ENCODE measurements at regions of chr17 and their contacts with region 1.

Region 1: GRCh38 chr17:61247439-61247838 is 152.2 kb upstream of the TBX2 start:
- DNase-seq: no peak
- ATAC-seq: no peak
- H3K4me3 ChIP-seq: no peak overlapping the region
- H3K4me3 Mint-ChIP-seq: no peak overlapping the region
- H3K27ac ChIP-seq: no peak overlapping the region
- H3K27ac Mint-ChIP-seq: no peak overlapping the region
- H3K4me1 ChIP-seq: no peaks in the 10 kb centered on the region
- H3K4me1 Mint-ChIP-seq: peaks cover 0 to 8% (median 5%) of the 10 kb centered on the region in 3 donors
- H3K27me3 ChIP-seq: no peaks in the 10 kb centered on the region
- H3K27me3 Mint-ChIP-seq: no peaks in the 10 kb centered on the region

Region 2: GRCh38 chr17:60851181-60851580 is 396.3 kb before region 1 on chr17:
- CTCF ChIA-PET with region 1: no interaction called
- POLR2A ChIA-PET with region 1: interaction called in 1 of 2 experiments, 10 read pairs
- DNase-seq: no peak
- ATAC-seq: no peak
- H3K4me3 ChIP-seq: no peak overlapping the region
- H3K4me3 Mint-ChIP-seq: no peak overlapping the region
- H3K27ac ChIP-seq: no peak overlapping the region
- H3K27ac Mint-ChIP-seq: no peak overlapping the region
- H3K4me1 ChIP-seq: no peaks in the 10 kb centered on the region
- H3K4me1 Mint-ChIP-seq: no peaks in the 10 kb centered on the region
- H3K27me3 ChIP-seq: no peaks in the 10 kb centered on the region
- H3K27me3 Mint-ChIP-seq: no peaks in the 10 kb centered on the region

Region 3: DNA sequence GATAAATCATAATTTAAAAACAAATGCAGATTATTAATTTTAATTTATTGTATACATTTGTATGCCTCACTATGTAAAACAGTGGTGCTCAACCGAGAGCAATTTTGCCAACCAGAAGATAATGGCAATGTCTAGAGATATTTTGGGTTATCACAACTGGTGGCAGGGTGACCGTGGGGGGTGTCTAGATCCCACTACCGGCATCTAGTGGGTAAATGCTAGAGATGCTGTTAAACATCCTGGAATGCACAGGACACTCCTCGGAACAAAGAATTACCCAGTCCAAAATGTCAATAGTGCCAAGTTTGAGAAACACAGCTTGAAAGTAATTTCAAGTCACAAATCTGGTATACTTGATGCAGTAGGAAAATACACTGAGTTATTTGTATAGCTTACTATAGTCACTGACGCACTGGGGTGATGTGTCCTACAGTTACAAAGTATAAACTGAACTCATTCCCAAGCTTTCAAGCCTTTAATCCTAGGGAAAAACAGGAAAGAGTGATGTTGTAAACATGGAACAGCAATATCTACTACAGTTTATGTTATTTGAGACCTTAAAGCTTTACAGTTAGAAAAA is 482.3 kb after region 1 on chr17:
- CTCF ChIA-PET with region 1: no interaction called
- POLR2A ChIA-PET with region 1: no interaction called
- DNase-seq: no peak
- ATAC-seq: no peak
- H3K4me3 ChIP-seq: no peak overlapping the region
- H3K4me3 Mint-ChIP-seq: no peak overlapping the region
- H3K27ac ChIP-seq: no peak overlapping the region
- H3K27ac Mint-ChIP-seq: no peak overlapping the region
- H3K4me1 ChIP-seq: no peaks in the 10 kb centered on the region
- H3K4me1 Mint-ChIP-seq: peaks cover 0 to 5% (median 0%) of the 10 kb centered on the region in 3 donors
- H3K27me3 ChIP-seq: no peaks in the 10 kb centered on the region
- H3K27me3 Mint-ChIP-seq: no peaks in the 10 kb centered on the region

Measured in T-cell (primary cell).